Right ventricle myocardium superior (tissue), 1 donor: ENCODE measurements at regions of chr6 and their contacts with region 1.

Region 1: DNA sequence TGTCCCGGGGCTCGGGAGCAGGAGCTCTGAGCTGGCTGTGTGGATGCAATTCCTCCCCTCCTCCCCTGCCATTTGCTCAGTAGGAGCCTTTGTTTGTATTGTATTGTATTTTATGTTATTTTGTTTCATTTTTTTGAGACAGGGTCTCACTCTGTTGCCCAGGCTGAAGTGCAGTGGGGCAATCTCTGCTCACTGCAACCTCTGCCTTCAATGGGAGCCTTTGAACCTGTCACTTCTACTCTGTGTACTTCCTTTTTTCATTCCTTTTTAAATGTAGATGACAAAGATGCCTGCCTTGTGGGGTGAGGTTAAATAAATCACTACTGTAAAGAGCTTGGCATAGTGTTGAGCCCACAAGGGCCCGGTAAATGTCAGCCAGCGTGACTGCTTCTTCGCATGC is 70.6 kb downstream of the DCDC2 start:
- DNase-seq: no peak
- ATAC-seq: no peak

Region 2: DNA sequence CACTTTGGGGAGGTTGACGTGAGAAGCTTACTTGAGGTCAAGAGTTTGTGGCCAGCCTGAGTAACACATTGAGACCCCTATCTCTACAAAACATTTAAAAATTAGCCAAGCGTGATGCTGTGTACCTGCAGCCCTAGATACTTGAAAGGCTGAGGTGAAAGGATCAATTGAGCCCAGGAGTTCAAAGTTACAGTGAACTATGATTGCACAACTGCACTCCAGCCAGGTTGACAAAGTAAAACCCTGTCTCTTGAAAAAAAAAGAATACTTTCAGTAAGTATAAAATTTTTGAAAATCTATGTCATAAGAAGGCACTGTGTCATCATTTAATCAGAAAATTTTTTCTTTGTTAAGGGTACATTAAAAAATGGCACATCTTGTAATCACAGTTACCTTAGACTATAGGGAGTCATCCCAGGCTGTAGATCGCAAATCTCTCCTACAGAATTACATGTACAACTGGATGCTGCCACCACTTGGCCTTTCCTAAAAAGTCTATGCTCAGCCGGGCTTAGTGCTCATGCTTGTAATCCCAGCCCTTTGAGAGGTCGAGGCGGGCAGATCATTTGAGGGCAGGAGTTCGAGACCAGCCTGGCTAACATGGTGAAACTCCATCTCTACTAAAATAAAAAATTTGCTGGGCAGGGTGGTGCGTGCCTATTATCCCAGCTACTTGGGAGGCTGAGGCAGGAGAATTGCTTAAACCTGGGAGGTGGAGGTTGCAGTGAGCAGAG is 98.5 kb after region 1 on chr6:
- intact Hi-C with region 1: loop called (anchors 5 kb)
- DNase-seq: no peak
- ATAC-seq: no peak